ENCODE measurements at regions of chr15 and their contacts with region 1.

Region 1: DNA sequence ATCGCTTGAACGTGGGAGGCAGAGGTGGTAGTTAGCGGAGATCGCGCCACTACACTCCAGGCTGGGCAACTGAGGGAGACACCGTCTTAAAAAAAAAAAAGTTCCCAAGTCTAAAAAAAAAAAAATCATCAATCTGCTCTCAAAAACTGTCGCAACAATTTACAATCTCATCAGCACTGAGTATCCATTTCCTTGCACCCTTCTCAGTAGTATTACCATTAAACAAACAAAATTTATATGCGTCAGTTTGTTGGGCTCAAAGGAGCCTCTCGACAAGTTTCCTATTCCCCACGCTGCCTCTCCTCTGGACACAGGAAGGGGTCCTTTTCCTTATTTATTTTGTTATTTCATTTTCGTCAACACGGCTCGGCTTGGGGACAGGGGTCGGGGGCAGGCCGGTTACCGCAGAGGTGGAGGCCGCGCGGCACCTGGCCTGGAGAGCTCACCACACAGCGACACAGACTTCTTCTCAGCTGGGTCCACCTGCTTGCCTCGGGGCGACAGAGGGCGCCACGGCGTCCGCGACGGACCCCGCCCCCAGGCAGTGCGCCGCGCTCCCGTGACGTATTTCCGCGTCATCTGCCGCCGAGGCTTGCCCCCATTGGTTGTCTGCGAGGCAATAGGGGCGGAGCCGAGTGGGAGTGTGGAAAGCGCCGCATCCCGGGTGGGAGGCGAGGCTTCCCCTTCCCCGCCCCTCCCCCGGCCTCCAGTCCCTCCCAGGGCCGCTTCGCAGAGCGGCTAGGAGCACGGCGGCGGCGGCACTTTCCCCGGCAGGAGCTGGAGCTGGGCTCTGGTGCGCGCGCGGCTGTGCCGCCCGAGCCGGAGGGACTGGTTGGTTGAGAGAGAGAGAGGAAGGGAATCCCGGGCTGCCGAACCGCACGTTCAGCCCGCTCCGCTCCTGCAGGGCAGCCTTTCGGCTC is at the start of gene MAP2K1:
- DNase-seq: peak; percentile 97
- ATAC-seq: peak; percentile 93 to 94
- H3K4me3 ChIP-seq: peak within 1 kb of the TSS; percentile 83
- H3K27ac ChIP-seq: peak within 1 kb of the TSS; percentile 88 to 92
- H3K4me1 ChIP-seq: peaks cover 27% of the 10 kb centered on the region
- CTCF ChIP-seq: peak; percentile 83
- EP300 ChIP-seq: no peak
- POLR2A ChIP-seq: peak; percentile 70
- RAD21 ChIP-seq: peak; percentile 47 to 56; a peak in 2 of 5 replicates
- polyA plus RNA-seq, gene MAP2K1: 30.3 and 34.3 TPM in 2 replicates

Region 2: DNA sequence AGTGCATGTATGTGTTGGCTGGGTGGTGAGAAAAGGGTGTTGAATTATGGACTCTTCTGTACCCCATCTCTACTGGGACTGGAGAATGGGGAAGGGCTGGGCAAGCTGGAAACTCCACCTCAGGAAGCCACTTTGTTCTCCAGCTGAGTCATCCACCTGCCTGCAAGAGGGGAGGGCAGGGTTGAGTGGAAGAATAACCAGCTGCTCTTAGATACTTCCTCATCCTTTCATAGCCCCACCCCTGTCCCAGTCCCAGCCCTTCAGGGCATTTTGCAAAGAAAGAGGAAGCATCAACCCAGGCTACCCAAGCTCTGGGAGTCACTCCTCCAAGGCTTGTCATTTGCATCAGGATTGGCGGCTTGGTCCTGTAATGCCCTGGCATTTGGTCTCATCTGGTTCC is 484.1 kb before region 1 on chr15:
- CTCF ChIA-PET with region 1: no interaction called
- POLR2A ChIA-PET with region 1: no interaction called
- DNase-seq: peak; percentile 73 to 84
- ATAC-seq: peak; percentile 89 to 90
- H3K4me3 ChIP-seq: no peak overlapping the region
- H3K27ac ChIP-seq: peak overlapping the region; percentile 50 to 69
- H3K4me1 ChIP-seq: peaks cover 30% of the 10 kb centered on the region
- CTCF ChIP-seq: no peak
- EP300 ChIP-seq: no peak
- POLR2A ChIP-seq: no peak
- RAD21 ChIP-seq: no peak

Region 3: DNA sequence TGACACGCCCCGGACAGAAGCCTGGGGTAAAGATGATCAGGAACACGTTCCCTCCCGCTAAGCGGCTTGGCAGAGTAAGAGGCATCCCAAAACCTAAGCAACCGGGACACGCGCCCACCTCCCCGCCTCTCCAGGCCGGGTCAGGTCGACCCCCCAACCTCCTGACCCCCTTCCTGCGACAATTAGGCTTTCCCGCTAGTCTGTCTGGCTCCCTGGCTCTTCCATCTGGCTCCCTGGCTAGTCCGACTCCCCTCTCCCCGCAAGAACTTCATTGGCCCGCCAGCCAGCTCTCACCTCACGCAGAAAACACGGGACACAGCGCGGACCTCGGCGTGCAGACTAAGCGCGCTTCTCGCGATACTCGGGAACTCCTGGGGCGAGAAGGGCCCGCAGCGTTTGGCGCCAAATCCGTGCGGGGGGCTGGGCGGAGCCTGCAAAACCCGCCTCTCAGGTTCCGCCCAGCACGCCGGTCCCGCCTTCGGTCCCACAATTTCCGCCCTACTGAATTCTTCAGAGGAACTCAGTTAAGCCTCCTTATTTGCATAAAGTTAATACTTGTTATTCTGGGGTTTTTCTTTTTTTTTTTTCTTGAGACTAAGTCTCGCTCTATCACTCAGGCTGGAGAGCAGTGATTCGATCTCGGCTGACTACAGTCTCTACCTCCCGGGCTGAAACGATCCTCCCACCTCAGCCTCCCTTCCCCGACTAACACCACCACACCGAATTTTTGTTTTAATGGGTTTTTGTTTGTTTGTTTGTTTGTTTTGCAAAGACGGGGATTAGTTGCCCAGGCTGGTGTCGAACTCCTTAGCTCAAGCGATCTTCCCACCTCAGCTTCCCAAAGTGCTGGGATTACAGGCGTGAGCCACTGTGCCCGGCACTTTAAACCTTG is 29.9 kb before region 1 on chr15 and contains the start of gene TIPIN:
- CTCF ChIA-PET with region 1: interaction called, 13 read pairs
- POLR2A ChIA-PET with region 1: interaction called, 7 read pairs
- DNase-seq: peak; percentile 98
- ATAC-seq: peak; percentile 98 to 99
- H3K4me3 ChIP-seq: peak within 1 kb of the TSS; percentile 76
- H3K27ac ChIP-seq: peak within 1 kb of the TSS; percentile 84 to 88
- H3K4me1 ChIP-seq: peaks cover 9% of the 10 kb centered on the region; the same call in 2 of the 3 replicates
- CTCF ChIP-seq: no peak
- EP300 ChIP-seq: no peak
- POLR2A ChIP-seq: peak; percentile 89
- RAD21 ChIP-seq: no peak; a peak in 2 of 5 replicates
- polyA plus RNA-seq, gene TIPIN: 23.7 and 37.4 TPM in 2 replicates

Region 4: GRCh38 chr15:66369773-66370651 is 16.5 kb before region 1 on chr15:
- CTCF ChIA-PET with region 1: interaction called, 24 read pairs
- POLR2A ChIA-PET with region 1: interaction called, 4 read pairs
- DNase-seq: peak; percentile 58 to 75
- ATAC-seq: peak; percentile 73 to 74; a peak in 5 of 6 replicates
- H3K4me3 ChIP-seq: peak overlapping the region; percentile 7; the same call in 1 of the 3 replicates
- H3K27ac ChIP-seq: peak overlapping the region; percentile 77 to 84
- H3K4me1 ChIP-seq: peaks cover 17% of the 10 kb centered on the region
- CTCF ChIP-seq: no peak
- EP300 ChIP-seq: no peak
- POLR2A ChIP-seq: no peak
- RAD21 ChIP-seq: no peak

Region 5: DNA sequence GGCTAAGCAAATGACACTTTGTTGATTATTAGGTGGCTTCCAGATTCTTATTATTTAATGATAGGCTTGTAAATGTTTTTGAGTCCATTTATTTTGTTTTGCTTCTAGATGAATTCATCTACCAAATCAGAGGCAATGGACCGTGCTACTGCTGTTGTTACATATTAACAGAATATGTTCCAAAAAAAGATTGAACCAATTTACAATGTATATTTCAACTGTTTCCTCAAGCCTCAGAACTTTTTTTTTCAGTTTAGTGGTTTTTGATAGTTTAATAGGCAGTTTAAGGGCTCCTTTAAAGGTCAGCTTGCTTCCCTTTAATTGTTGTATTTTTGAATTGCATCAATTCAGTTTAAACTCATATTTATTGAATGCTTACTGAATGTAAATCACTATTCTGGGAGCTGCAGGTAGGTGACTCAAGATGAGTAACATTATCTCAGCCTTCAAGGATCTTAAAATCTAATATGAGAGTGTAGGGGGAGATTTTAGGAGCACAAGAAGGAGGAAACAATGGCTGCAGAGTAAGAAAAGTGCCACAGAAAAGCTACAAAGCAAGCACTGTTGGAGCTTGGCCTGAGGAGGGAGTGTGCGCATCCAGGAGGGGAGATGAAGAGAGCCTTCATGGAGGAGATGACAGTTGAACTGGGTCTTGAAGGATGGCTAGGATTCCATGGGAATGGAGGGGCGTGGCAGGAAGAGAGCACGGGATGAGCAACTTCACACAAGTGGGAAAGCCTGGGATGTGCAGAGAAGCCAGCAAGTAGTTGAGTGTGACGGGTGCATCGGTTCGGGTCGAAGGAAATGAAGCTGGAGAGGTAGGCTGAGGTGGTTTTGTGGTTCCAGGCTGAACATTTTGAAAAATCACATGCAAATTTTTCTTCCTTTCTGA is 14.9 kb after region 1 on chr15:
- CTCF ChIA-PET with region 1: interaction called, 16 read pairs
- POLR2A ChIA-PET with region 1: no interaction called
- DNase-seq: peak in 1 of 2 experiments; percentile 45
- ATAC-seq: peak; percentile 56 to 70; a peak in 4 of 6 replicates
- H3K4me3 ChIP-seq: no peak overlapping the region
- H3K27ac ChIP-seq: no peak overlapping the region
- H3K4me1 ChIP-seq: peaks cover 20% of the 10 kb centered on the region
- CTCF ChIP-seq: no peak
- EP300 ChIP-seq: no peak
- POLR2A ChIP-seq: no peak
- RAD21 ChIP-seq: no peak

Region 6: GRCh38 chr15:66472176-66472999 is 85.9 kb after region 1 on chr15:
- CTCF ChIA-PET with region 1: interaction called, 16 read pairs
- POLR2A ChIA-PET with region 1: interaction called, 3 read pairs
- DNase-seq: no peak
- ATAC-seq: peak in 1 of 2 experiments; percentile 29; a peak in 3 of 6 replicates
- H3K4me3 ChIP-seq: no peak overlapping the region
- H3K27ac ChIP-seq: peak overlapping the region in 1 of 2 experiments; percentile 34; a peak in 2 of 6 replicates
- H3K4me1 ChIP-seq: peaks cover 14% of the 10 kb centered on the region
- CTCF ChIP-seq: no peak
- EP300 ChIP-seq: no peak
- POLR2A ChIP-seq: no peak
- RAD21 ChIP-seq: no peak

Region 7: GRCh38 chr15:66578286-66578875 is 191.9 kb after region 1 on chr15:
- CTCF ChIA-PET with region 1: no interaction called
- POLR2A ChIA-PET with region 1: no interaction called
- DNase-seq: no peak
- ATAC-seq: no peak
- H3K4me3 ChIP-seq: no peak overlapping the region
- H3K27ac ChIP-seq: no peak overlapping the region
- H3K4me1 ChIP-seq: no peaks in the 10 kb centered on the region
- CTCF ChIP-seq: no peak
- EP300 ChIP-seq: no peak
- POLR2A ChIP-seq: no peak
- RAD21 ChIP-seq: no peak

Measured in A549 (cell line).